ENCODE measurements at regions of chr2 and their contacts with region 1.

Region 1: GRCh38 chr2:85888684-85889626 is at the start of gene ST3GAL5:
- DNase-seq: peak; percentile 67
- ATAC-seq: peak; percentile 85
- H3K4me3 ChIP-seq: peak within 1 kb of the TSS; percentile 66 to 85
- H3K27ac ChIP-seq: peak within 1 kb of the TSS; percentile 31; the same call in 1 of the 2 replicates
- H3K4me1 ChIP-seq: peaks cover 17 to 36% of the 10 kb centered on the region in 2 experiments
- H3K27me3 ChIP-seq: no peaks in the 10 kb centered on the region
- CTCF ChIP-seq: peak; percentile 45 to 83 (median 71); a peak in 5 of 6 replicates
- POLR2A ChIP-seq: no peak
- RAD21 ChIP-seq: peak; percentile 38; the same call in 1 of the 2 replicates
- total RNA-seq, gene ST3GAL5: 14.8 TPM

Region 2: DNA sequence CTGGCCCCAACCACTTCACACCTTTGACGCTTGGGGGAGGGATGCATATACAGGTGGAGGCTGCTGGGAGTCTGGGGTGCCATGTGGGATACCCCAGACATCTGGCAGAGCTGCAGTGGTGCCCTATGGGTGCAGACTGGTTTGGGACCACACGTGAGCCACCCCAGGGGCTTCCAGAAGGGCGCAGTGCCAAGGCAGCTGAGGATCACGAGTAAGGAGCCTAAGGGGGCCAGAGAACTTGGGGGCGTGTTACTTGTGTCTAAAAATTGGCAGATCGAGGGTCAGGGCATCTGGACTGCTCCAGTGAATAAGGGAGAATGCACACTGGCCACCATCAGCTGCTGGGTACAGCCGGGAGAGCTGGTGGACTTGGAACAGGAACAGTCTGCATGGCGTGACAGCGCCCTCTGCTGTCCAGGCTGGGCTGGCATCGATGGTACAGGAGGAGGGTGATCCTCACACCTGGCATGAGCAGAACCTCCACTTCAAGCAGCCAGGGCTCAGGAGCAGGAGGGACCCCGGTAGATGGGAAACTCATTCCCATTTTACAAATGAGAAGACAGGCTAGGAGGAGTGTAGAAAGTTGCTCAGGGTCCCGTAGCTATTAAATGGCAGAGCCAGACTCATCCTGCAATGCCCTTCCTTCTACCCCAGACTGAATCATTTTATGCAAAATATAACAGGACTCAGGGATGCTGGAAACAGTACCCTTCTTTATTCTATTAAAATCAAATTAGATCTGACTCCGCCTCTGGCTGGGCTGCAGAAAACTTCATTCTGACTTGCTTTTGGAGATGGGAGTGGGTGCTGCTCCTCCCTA is 74.8 kb before region 1 on chr2:
- CTCF ChIA-PET with region 1: no interaction called
- POLR2A ChIA-PET with region 1: no interaction called
- RAD21 ChIA-PET with region 1: no interaction called
- intact Hi-C with region 1: no loop called
- DNase-seq: peak; percentile 76
- ATAC-seq: peak; percentile 99
- H3K4me3 ChIP-seq: no peak overlapping the region
- H3K27ac ChIP-seq: no peak overlapping the region
- H3K4me1 ChIP-seq: no peaks in the 10 kb centered on the region
- H3K27me3 ChIP-seq: no peaks in the 10 kb centered on the region
- CTCF ChIP-seq: peak; percentile 93 to 98 (median 96)
- POLR2A ChIP-seq: no peak
- RAD21 ChIP-seq: peak; percentile 99

Region 3: DNA sequence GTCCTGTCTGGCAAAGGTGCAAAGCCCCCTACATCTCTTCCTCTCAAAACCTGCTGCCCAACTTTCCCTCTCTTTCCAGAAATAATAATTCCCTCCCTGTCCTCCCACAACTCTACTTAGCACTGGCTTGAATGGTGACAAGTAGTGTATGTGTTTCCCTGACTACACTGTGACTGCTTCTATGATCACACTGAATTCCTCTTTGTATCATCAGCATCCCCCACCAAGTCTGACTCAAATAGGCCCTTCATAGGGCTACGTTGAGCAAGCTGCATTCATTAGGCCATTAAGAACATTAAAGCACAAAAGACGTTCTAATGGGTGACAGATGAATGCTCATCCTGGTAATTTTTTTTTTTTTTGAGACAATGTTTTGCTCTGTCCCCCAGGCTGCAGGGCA is 13.5 kb after region 1 on chr2:
- CTCF ChIA-PET with region 1: interaction called, 19 read pairs
- POLR2A ChIA-PET with region 1: no interaction called
- RAD21 ChIA-PET with region 1: no interaction called
- intact Hi-C with region 1: no loop called
- DNase-seq: no peak
- ATAC-seq: no peak
- H3K4me3 ChIP-seq: no peak overlapping the region
- H3K27ac ChIP-seq: no peak overlapping the region
- H3K4me1 ChIP-seq: peaks cover 0 to 1% of the 10 kb centered on the region in 2 experiments; a peak in 1 of 4 replicates
- H3K27me3 ChIP-seq: no peaks in the 10 kb centered on the region
- CTCF ChIP-seq: no peak
- POLR2A ChIP-seq: no peak
- RAD21 ChIP-seq: no peak

Region 4: DNA sequence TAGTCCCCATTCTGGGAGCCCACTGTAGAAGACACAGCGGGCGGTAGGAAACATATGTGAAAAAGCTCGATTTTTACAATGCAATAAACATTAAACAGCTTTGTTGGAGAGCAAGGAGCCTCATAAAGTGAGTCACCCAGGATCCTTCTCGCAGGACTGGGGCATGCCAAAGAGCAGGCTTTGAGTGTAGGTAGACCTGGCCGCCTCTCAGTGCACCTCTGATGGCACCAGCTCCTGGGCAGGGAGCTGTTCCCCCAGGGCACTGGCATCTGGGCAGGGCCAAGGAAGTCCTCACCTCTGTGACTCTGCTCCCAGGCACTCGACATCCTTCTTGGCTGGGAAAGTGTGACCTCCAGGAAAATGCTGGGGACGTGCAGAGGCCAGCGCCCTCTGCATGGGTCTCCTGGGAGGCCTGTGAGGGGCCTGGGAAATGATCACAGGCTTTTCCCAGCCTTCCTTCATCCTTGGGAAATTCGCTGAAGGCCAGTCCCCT is 122.5 kb after region 1 on chr2:
- CTCF ChIA-PET with region 1: no interaction called
- POLR2A ChIA-PET with region 1: no interaction called
- RAD21 ChIA-PET with region 1: no interaction called
- intact Hi-C with region 1: loop called (anchors 5 kb)
- DNase-seq: no peak
- ATAC-seq: peak; percentile 11; the same call in 1 of the 2 replicates
- H3K4me3 ChIP-seq: no peak overlapping the region
- H3K27ac ChIP-seq: no peak overlapping the region
- H3K4me1 ChIP-seq: no peaks in the 10 kb centered on the region
- H3K27me3 ChIP-seq: no peaks in the 10 kb centered on the region
- CTCF ChIP-seq: no peak
- POLR2A ChIP-seq: no peak
- RAD21 ChIP-seq: no peak

Region 5: DNA sequence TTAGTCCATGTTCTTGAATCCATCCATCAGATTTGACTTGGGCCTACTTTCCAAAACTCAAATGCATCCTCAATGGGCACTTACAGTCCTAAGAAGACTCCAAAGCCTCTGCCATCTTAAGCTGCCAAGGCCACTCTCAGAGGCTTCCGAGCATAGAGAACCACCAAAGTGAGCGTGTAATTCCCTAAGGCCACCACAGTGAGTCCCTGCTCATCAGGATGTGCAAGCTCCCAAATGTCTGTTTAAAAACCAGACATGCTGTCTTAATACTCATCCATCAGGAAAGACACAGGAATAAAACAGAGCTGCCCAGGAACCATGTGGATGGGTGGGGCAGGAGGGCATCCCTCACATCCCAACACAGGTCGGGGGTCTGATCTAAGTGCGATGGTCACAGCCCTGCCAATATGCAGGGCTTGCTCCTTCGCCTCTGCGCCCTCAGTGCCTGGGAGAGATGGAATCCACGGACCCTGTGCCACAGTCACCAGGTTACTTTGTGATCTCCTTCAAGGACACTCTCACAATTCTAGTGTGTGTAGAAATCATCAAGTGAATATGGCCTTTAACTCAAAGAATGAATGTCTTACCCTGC is 136.4 kb after region 1 on chr2:
- CTCF ChIA-PET with region 1: no interaction called
- POLR2A ChIA-PET with region 1: no interaction called
- RAD21 ChIA-PET with region 1: no interaction called
- intact Hi-C with region 1: no loop called
- DNase-seq: no peak
- ATAC-seq: peak; percentile 48
- H3K4me3 ChIP-seq: no peak overlapping the region
- H3K27ac ChIP-seq: no peak overlapping the region
- H3K4me1 ChIP-seq: no peaks in the 10 kb centered on the region
- H3K27me3 ChIP-seq: no peaks in the 10 kb centered on the region
- CTCF ChIP-seq: peak in 2 of 3 experiments; percentile 24 to 30; a peak in 1 of 6 replicates
- POLR2A ChIP-seq: no peak
- RAD21 ChIP-seq: 0 out of 2 replicates have a peak, but pooled peaks have one; percentile 7